ENCODE measurements at regions of chr12 and their contacts with region 1.

Region 1: DNA sequence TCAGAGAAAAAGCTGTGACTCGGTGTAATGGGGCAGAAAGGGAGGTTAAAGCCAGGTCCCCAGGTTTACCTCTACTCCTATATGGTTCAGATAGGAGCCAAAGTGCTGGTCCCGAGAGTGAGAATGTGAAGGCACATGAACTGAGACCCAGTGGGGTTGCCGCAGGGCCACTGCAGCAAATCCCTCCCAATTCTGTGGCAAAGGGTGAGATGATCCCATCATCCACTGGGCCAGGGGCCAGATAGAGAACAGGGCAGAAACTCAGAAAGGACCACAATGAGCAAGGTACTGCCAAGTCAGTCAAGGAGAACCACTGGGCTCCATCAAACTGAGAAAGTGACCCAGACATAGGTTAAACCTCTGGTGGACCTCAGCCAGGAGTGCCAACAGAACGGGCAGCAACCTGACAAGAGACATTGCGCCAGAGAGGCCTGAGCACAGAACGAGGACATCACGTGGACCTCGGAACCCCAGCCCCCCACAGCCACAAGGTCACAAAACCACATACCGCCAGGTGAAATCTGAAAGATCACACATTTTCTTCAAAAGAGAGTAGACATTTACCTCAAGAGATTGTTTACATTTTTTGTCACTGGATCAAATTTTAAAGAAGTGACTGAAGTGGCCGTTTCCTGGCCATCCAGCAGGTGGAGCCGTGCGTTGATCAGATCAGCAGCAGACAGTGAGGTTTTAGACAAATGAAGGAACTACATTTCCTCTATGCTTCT is 20.5 kb upstream of the ITPR2 start:
- DNase-seq: peak; percentile 29 to 50
- ATAC-seq: peak; percentile 80 to 84
- H3K4me3 ChIP-seq: no peak overlapping the region
- H3K27ac ChIP-seq: no peak overlapping the region
- H3K4me1 ChIP-seq: peaks cover 0 to 6% of the 10 kb centered on the region in 2 donors
- H3K27me3 ChIP-seq: no peaks in the 10 kb centered on the region
- CTCF ChIP-seq: peak; percentile 69 to 87 (median 79)
- POLR2A ChIP-seq: no peak

Region 2: DNA sequence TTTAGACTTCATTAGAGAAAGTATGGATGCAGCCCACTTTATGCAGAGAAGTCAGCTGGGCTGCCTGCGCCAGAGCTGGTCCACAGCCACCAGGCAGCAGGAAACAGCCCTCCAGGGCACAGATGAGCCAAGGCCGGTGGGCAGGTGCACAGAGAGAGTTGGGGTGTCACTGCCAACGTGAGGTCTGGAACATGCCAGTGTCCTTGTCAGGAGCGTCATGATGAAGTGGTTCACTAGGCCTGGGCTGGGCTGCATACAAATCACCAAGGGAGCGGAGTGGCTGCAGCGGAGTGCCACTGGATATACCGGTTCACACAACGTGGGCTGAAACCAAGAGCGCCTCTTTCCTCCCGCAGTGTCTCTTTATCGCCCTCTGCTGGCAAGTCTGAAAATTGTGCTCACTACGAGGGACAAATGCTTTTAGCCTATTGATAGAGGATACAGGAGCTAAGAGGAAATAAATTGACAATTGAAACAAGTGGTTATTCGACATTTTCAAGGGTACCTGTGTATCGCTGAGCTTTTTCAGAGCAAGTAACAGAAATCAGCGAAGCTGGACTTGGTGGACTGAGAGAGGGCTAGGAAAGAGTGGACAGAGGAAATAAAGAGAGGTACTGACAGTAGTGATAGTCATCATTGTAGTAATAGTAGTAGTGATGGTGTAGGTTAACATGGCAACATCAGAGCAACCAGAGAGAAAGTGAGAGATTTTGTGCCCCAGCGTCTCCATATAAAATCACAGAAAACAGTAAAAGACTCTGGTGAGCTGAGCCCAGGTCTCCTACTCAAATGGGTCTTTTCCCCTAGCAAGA is 31.5 kb after region 1 on chr12:
- in situ Hi-C with region 1: loop called in 2 of 4 experiments (anchors 5 kb)
- intact Hi-C with region 1: loop called (anchors 1 kb)
- DNase-seq: peak; percentile 62 to 71
- ATAC-seq: peak; percentile 92 to 98
- H3K4me3 ChIP-seq: peak overlapping the region in 1 of 4 donors; percentile 29
- H3K27ac ChIP-seq: no peak overlapping the region
- H3K4me1 ChIP-seq: no peaks in the 10 kb centered on the region
- H3K27me3 ChIP-seq: no peaks in the 10 kb centered on the region
- CTCF ChIP-seq: peak; percentile 77 to 97 (median 90)
- POLR2A ChIP-seq: no peak

Region 3: DNA sequence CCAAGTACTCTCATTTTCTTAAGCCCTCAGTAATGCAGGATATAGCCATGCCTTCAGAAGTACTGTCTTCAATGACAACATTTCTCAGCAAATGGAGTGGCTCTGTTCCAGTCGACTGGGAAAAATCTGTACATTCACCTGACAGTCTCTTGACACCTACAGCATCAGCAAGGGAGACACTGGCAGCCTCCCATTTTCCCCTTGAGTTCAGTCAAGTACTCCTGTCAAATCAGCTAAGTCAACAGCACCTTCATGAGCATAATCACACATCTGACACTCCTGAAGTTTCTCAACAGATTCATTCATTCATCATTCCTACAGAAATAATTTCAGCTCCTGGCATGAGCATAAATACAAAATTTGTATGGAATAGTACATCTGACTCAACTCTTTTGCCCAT is 38.2 kb after region 1 on chr12:
- in situ Hi-C with region 1: loop called in 2 of 4 experiments (anchors 5 kb)
- intact Hi-C with region 1: no loop called
- DNase-seq: no peak
- ATAC-seq: no peak
- H3K4me3 ChIP-seq: no peak overlapping the region
- H3K27ac ChIP-seq: no peak overlapping the region
- H3K4me1 ChIP-seq: no peaks in the 10 kb centered on the region
- H3K27me3 ChIP-seq: no peaks in the 10 kb centered on the region
- CTCF ChIP-seq: no peak
- POLR2A ChIP-seq: no peak